CD4-positive, alpha-beta memory T cell (primary cell): ENCODE measurements at regions of chr22 and their contacts with region 1.

Region 1: GRCh38 chr22:46296257-46297150 is at the start of gene GTSE1:
- DNase-seq: peak; percentile 94 to 97 (median 97)
- H3K4me3 ChIP-seq: peak within 1 kb of the TSS; percentile 48 to 63
- H3K4me3 Mint-ChIP-seq: peak within 1 kb of the TSS; percentile 79 to 97 (median 91)
- H3K27ac ChIP-seq: peak within 1 kb of the TSS; percentile 81
- H3K27ac Mint-ChIP-seq: peak within 1 kb of the TSS; percentile 93 to 99 (median 98)
- H3K4me1 ChIP-seq: peaks cover 19% of the 10 kb centered on the region
- H3K4me1 Mint-ChIP-seq: peaks cover 14 to 26% (median 19%) of the 10 kb centered on the region in 4 donors
- H3K27me3 ChIP-seq: no peaks in the 10 kb centered on the region
- H3K27me3 Mint-ChIP-seq: no peaks in the 10 kb centered on the region
- total RNA-seq, gene GTSE1: 0.64 TPM in 1 of 2 experiments, not detected in the other

Region 2: DNA sequence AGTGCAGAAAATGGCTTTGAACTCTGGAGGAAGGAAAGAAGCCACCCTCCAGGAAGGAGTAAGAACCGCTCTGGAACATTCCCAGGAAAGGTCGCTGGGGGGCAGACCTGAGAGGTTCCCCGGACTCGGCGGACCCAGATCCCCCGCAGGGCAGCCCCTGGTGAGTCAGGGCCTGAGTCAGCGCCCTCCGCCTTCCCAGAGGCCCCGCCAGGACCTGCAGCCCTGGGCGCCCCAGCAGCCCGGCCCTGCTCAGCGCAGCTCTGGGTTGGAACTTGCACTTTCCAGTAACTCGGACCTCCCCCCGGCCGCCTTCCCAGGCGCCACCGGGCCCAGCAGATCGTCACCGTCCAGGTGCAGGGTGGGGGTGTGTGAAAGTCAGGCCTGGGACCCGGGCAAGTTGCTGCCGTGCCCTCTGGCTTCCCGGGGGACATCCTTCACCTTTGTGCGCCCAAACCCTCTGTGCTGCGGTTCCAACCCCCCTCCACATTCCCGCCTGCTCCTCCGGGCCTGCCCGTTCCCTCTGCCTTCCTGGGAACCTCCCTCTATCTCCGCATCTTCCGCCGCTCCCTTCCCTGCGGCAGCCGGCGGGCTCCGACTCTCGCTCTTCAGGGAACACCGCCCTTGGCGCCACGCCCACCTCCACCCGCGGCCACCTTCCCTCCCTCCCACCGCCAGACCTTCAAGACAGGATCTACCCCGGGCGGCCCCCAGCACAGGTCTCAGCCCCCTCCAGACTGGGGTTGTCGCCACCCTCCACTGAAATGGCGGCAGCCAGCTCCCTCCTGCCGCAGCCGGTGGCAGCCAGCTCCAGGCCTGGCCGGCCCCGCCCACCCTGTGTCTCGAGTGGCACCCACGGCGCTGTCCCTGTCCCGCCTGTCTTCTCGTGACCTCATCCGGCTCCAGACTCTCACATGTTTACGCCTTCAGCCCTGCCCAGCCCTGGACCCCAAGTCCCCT is 282.8 kb before region 1 on chr22:
- CTCF ChIA-PET with region 1: no interaction called
- POLR2A ChIA-PET with region 1: interaction called, 3 read pairs
- intact Hi-C with region 1: loop called (anchors 5 kb)
- DNase-seq: peak; percentile 68 to 86 (median 71)
- H3K4me3 ChIP-seq: peak overlapping the region; percentile 61 to 71
- H3K4me3 Mint-ChIP-seq: peak overlapping the region; percentile 87 to 93 (median 91)
- H3K27ac ChIP-seq: peak overlapping the region; percentile 69
- H3K27ac Mint-ChIP-seq: peak overlapping the region; percentile 80 to 94 (median 92)
- H3K4me1 ChIP-seq: peaks cover 9% of the 10 kb centered on the region
- H3K4me1 Mint-ChIP-seq: peaks cover 5 to 17% (median 9%) of the 10 kb centered on the region in 4 donors
- H3K27me3 ChIP-seq: no peaks in the 10 kb centered on the region
- H3K27me3 Mint-ChIP-seq: no peaks in the 10 kb centered on the region

Region 3: DNA sequence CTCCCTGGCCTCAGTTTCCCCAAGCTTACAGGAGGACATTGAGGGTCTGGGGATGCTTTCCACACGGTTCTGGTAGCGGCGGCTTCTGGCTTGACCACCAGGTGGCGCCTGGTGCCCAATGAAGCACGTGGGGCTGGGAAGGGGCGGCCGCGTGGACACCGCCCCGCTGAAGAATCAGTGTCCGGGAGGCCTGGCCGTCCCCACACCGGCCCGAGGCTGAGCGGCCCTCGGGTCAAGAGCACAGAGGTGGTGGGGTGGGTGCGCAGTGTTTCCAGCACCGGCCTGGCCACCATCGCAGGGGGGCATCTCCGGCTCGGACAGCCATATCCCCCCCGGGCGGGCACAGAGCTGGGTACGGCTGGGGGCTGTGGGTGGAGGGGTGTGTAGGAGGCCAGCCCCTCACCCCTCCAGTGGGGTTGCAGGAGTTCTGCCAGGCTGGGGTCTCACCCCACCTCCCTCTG is 174.0 kb before region 1 on chr22:
- CTCF ChIA-PET with region 1: interaction called, 22 read pairs
- POLR2A ChIA-PET with region 1: interaction called, 5 read pairs
- intact Hi-C with region 1: loop called (anchors 1 kb)
- DNase-seq: peak in 4 of 5 donors; percentile 51 to 66 (median 58)
- H3K4me3 ChIP-seq: no peak overlapping the region
- H3K4me3 Mint-ChIP-seq: no peak overlapping the region
- H3K27ac ChIP-seq: no peak overlapping the region
- H3K27ac Mint-ChIP-seq: no peak overlapping the region
- H3K4me1 ChIP-seq: no peaks in the 10 kb centered on the region
- H3K4me1 Mint-ChIP-seq: no peaks in the 10 kb centered on the region
- H3K27me3 ChIP-seq: no peaks in the 10 kb centered on the region
- H3K27me3 Mint-ChIP-seq: no peaks in the 10 kb centered on the region

Region 4: GRCh38 chr22:46150034-46150654 is 146.4 kb before region 1 on chr22 and contains the start of gene PPARA:
- CTCF ChIA-PET with region 1: no interaction called
- POLR2A ChIA-PET with region 1: interaction called, 30 read pairs
- intact Hi-C with region 1: loop called (anchors 1 kb)
- DNase-seq: peak; percentile 76 to 86 (median 80)
- H3K4me3 ChIP-seq: peak within 1 kb of the TSS; percentile 57 to 74
- H3K4me3 Mint-ChIP-seq: peak within 1 kb of the TSS; percentile 77 to 89 (median 83)
- H3K27ac ChIP-seq: peak within 1 kb of the TSS; percentile 61
- H3K27ac Mint-ChIP-seq: peak within 1 kb of the TSS; percentile 76 to 90 (median 85)
- H3K4me1 ChIP-seq: peaks cover 15% of the 10 kb centered on the region
- H3K4me1 Mint-ChIP-seq: peaks cover 12 to 26% (median 16%) of the 10 kb centered on the region in 4 donors
- H3K27me3 ChIP-seq: no peaks in the 10 kb centered on the region
- H3K27me3 Mint-ChIP-seq: no peaks in the 10 kb centered on the region
- total RNA-seq, gene PPARA: 21.3 to 23.2 TPM

Region 5: DNA sequence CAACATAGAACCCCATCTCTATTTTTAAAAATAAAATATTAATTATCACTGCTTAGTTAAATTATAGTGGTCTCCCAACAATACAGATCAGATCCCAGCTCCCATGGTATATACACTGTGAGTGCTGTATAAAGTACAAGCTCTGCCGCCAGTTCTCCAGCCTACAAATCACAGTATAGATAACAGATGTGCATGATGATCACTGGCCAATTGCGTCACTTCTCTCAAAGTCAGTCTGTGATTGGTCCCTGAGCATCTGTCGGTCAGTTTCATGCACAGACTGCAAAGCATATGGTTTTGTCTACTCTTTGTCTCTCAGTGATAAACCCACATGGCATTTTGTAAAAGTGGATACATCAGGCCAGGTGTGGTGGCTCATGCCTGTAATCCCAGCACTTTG is 130.5 kb before region 1 on chr22:
- CTCF ChIA-PET with region 1: no interaction called
- POLR2A ChIA-PET with region 1: no interaction called
- intact Hi-C with region 1: no loop called
- DNase-seq: no peak
- H3K4me3 ChIP-seq: no peak overlapping the region
- H3K4me3 Mint-ChIP-seq: no peak overlapping the region
- H3K27ac ChIP-seq: no peak overlapping the region
- H3K27ac Mint-ChIP-seq: no peak overlapping the region
- H3K4me1 ChIP-seq: peaks cover under 1% of the 10 kb centered on the region
- H3K4me1 Mint-ChIP-seq: peaks cover under 1 to 5% (median 4%) of the 10 kb centered on the region in 4 donors
- H3K27me3 ChIP-seq: no peaks in the 10 kb centered on the region
- H3K27me3 Mint-ChIP-seq: no peaks in the 10 kb centered on the region

Region 6: GRCh38 chr22:46250035-46250782 is 46.3 kb before region 1 on chr22 and contains the start of gene CDPF1:
- CTCF ChIA-PET with region 1: interaction called, 4 read pairs
- POLR2A ChIA-PET with region 1: interaction called, 44 read pairs
- intact Hi-C with region 1: loop called (anchors 1 kb)
- DNase-seq: peak; percentile 88 to 91 (median 89)
- H3K4me3 ChIP-seq: peak within 1 kb of the TSS; percentile 29 to 76
- H3K4me3 Mint-ChIP-seq: peak within 1 kb of the TSS; percentile 64 to 88 (median 80)
- H3K27ac ChIP-seq: peak within 1 kb of the TSS; percentile 63
- H3K27ac Mint-ChIP-seq: peak within 1 kb of the TSS; percentile 41 to 94 (median 82)
- H3K4me1 ChIP-seq: peaks cover 24% of the 10 kb centered on the region
- H3K4me1 Mint-ChIP-seq: peaks cover 15 to 48% (median 24%) of the 10 kb centered on the region in 4 donors
- H3K27me3 ChIP-seq: no peaks in the 10 kb centered on the region
- H3K27me3 Mint-ChIP-seq: no peaks in the 10 kb centered on the region
- total RNA-seq, gene CDPF1: 10.3 to 11.5 TPM

Region 7: GRCh38 chr22:46267431-46268279 is 28.8 kb before region 1 on chr22 and contains the start of gene TTC38:
- CTCF ChIA-PET with region 1: interaction called, 4 read pairs
- POLR2A ChIA-PET with region 1: interaction called, 14 read pairs
- intact Hi-C with region 1: no loop called
- DNase-seq: peak; percentile 22 to 59 (median 26)
- H3K4me3 ChIP-seq: peak within 1 kb of the TSS in 1 of 2 donors; percentile 49
- H3K4me3 Mint-ChIP-seq: peak within 1 kb of the TSS; percentile 86 to 95 (median 91)
- H3K27ac ChIP-seq: peak within 1 kb of the TSS; percentile 18
- H3K27ac Mint-ChIP-seq: peak within 1 kb of the TSS; percentile 16 to 82 (median 69)
- H3K4me1 ChIP-seq: peaks cover 11% of the 10 kb centered on the region
- H3K4me1 Mint-ChIP-seq: peaks cover 9 to 32% (median 15%) of the 10 kb centered on the region in 4 donors
- H3K27me3 ChIP-seq: peaks cover 6% of the 10 kb centered on the region
- H3K27me3 Mint-ChIP-seq: peaks cover 12 to 18% of the 10 kb centered on the region in 2 donors
- total RNA-seq, gene TTC38: 3.9 to 4.3 TPM

Region 8: GRCh38 chr22:46335201-46336118 is 39.0 kb after region 1 on chr22 and contains the start of gene TRMU:
- CTCF ChIA-PET with region 1: interaction called, 6 read pairs
- POLR2A ChIA-PET with region 1: interaction called, 9 read pairs
- intact Hi-C with region 1: loop called (anchors 1 kb)
- DNase-seq: peak; percentile 57 to 68 (median 62)
- H3K4me3 ChIP-seq: peak within 1 kb of the TSS; percentile 51 to 84
- H3K4me3 Mint-ChIP-seq: peak within 1 kb of the TSS; percentile 93 to 98 (median 95)
- H3K27ac ChIP-seq: peak within 1 kb of the TSS; percentile 69
- H3K27ac Mint-ChIP-seq: peak within 1 kb of the TSS; percentile 89 to 95 (median 94)
- H3K4me1 ChIP-seq: peaks cover 17% of the 10 kb centered on the region
- H3K4me1 Mint-ChIP-seq: peaks cover 23 to 47% (median 36%) of the 10 kb centered on the region in 4 donors
- H3K27me3 ChIP-seq: no peaks in the 10 kb centered on the region
- H3K27me3 Mint-ChIP-seq: no peaks in the 10 kb centered on the region
- total RNA-seq, gene TRMU: 79.9 to 93.0 TPM